ENCODE measurements at regions of chr16 and their contacts with region 1.

Region 1: DNA sequence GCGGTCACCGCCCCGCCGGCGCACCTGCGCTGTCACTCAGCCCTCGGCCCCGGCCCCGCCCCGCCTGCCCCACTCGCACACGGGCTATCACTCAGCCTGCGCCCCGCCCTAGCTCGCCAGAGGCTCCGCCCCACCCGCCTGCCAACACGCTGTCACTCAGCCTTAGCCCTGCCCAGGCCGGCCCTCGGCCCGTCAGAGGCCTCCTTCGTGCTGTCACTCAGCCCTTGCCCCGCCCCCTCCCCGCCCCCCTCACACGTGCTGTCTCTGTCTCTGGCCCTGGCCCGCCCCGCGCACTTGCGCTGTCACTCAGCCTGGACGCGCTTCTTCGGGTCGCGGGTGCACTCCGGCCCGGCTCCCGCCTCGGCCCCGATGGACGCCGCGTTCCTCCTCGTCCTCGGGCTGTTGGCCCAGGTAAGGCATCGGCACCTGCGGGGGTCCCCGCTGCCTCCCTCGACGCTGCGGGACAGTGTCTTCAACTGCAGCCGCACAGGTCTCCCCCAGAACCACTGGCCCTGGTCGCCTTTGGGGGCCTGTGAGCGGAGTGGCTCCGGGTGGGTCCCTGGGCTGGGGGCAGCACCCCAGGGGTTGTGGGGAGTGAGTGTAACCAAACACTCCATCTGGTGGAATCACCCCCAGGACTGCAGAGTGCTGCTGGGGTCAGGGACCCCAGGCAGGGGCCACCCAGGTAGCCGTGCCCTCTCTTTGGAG is at the start of gene CDH15:
- DNase-seq: peak; percentile 92 to 96
- H3K4me3 ChIP-seq: peak within 1 kb of the TSS in 1 of 3 donors; percentile 14
- H3K27ac ChIP-seq: no peak within 1 kb of the TSS
- H3K4me1 ChIP-seq: peaks cover 11 to 20% of the 10 kb centered on the region in 2 donors
- H3K27me3 ChIP-seq: no peaks in the 10 kb centered on the region
- CTCF ChIP-seq: no peak
- POLR2A ChIP-seq: no peak
- total RNA-seq, gene CDH15: not detected

Region 2: GRCh38 chr16:88737298-88738150 is 434.1 kb before region 1 on chr16:
- intact Hi-C with region 1: loop called (anchors 5 kb)
- DNase-seq: peak; percentile 84 to 85
- H3K4me3 ChIP-seq: no peak overlapping the region
- H3K27ac ChIP-seq: no peak overlapping the region
- H3K4me1 ChIP-seq: peaks cover 7 to 12% of the 10 kb centered on the region in 2 donors
- H3K27me3 ChIP-seq: no peaks in the 10 kb centered on the region
- CTCF ChIP-seq: peak; percentile 85 to 100 (median 97)
- POLR2A ChIP-seq: no peak

Region 3: DNA sequence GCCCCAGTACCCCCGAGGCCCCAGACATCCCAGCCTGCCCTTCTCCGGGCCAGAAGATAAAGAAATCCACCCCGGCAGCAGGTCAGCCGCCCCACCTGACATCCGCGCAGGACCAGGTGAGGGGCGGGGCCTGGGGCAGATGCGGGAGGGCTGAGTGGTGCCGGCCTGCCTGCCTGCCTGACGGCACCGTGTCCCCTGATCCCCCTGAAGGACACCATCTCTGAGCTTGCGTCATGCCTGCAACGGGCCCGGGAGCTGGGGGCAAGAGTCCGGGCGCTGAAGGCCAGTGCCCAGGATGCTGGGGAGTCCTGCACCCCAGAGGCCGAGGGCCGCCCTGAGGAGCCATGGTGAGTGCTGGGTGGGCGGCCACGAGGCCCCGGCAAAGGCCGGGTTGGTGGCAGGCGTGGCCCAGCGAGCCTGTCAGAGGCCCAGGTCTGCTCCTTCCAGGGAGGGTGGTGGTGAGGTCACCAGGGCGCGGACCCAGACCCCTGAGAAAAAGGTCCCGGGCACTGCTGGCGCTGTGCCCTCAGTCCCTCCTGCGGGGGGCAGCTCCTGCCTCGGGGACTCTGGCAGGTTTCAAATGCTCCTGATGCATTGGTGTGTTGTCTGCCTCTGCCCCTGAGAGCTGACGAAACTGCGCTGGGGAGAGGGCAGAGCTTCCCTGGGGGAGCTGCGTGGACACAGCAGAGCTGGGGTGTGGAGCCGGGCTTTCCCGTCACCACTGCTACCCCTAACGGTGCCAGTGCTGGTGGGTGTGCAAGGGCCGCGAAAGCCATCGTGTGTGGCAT is 366.9 kb before region 1 on chr16:
- intact Hi-C with region 1: loop called (anchors 5 kb)
- DNase-seq: peak; percentile 35 to 55
- H3K4me3 ChIP-seq: no peak overlapping the region
- H3K27ac ChIP-seq: no peak overlapping the region
- H3K4me1 ChIP-seq: peaks cover 14 to 22% of the 10 kb centered on the region in 2 donors
- H3K27me3 ChIP-seq: no peaks in the 10 kb centered on the region
- CTCF ChIP-seq: no peak
- POLR2A ChIP-seq: no peak

Region 4: GRCh38 chr16:88941913-88942909 is 229.4 kb before region 1 on chr16:
- intact Hi-C with region 1: loop called (anchors 10 kb)
- DNase-seq: peak in 1 of 2 donors; percentile 25
- H3K4me3 ChIP-seq: peak overlapping the region in 1 of 3 donors; percentile 24
- H3K27ac ChIP-seq: no peak overlapping the region
- H3K4me1 ChIP-seq: peaks cover 0 to 26% of the 10 kb centered on the region in 2 donors
- H3K27me3 ChIP-seq: no peaks in the 10 kb centered on the region
- CTCF ChIP-seq: peak in 4 of 6 experiments; percentile 26 to 79 (median 39)
- POLR2A ChIP-seq: no peak

Region 5: GRCh38 chr16:89241187-89242007 is 69.8 kb after region 1 on chr16:
- intact Hi-C with region 1: no loop called
- DNase-seq: peak; percentile 53 to 64
- H3K4me3 ChIP-seq: peak overlapping the region; percentile 8 to 60 (median 14)
- H3K27ac ChIP-seq: peak overlapping the region; percentile 54 to 91 (median 77)
- H3K4me1 ChIP-seq: peaks cover 4% of the 10 kb centered on the region in 2 donors
- H3K27me3 ChIP-seq: no peaks in the 10 kb centered on the region
- CTCF ChIP-seq: no peak
- POLR2A ChIP-seq: peak in 1 of 2 donors; percentile 72

Measured in thyroid gland (tissue), 4 donors.